ENCODE measurements at regions of chr18 and their contacts with region 1.

Region 1: GRCh38 chr18:72762515-72763122 is 105.2 kb downstream of the NETO1 start:
- DNase-seq: peak; percentile 84
- ATAC-seq: peak; percentile 61
- H3K4me3 ChIP-seq: no peak overlapping the region
- H3K27ac ChIP-seq: no peak overlapping the region
- H3K4me1 ChIP-seq: no peaks in the 10 kb centered on the region
- H3K27me3 ChIP-seq: no peaks in the 10 kb centered on the region
- CTCF ChIP-seq: peak; percentile 83

Region 2: DNA sequence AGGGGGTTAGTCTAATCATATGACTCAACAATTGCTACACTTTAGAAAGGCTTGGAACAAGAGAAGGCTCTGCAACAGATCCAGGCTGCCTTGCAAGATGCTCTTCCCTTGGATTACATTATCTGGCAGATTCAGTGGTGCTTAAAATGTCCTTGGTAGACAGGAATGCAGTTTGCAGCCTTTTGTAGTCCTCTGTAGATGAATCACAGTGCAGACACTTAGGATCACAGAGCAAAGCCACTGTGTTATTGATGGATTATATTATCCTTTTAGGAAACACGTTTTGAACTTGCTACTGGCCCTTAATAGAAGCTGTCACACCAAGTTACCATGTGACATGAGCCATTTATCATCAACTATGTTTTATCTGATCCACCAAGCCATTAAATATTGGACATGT is 370.7 kb before region 1 on chr18:
- CTCF ChIA-PET with region 1: no interaction called
- POLR2A ChIA-PET with region 1: no interaction called
- intact Hi-C with region 1: no loop called
- DNase-seq: no peak
- ATAC-seq: no peak
- H3K4me3 ChIP-seq: no peak overlapping the region
- H3K27ac ChIP-seq: no peak overlapping the region
- H3K4me1 ChIP-seq: no peaks in the 10 kb centered on the region
- H3K27me3 ChIP-seq: no peaks in the 10 kb centered on the region
- CTCF ChIP-seq: no peak

Region 3: DNA sequence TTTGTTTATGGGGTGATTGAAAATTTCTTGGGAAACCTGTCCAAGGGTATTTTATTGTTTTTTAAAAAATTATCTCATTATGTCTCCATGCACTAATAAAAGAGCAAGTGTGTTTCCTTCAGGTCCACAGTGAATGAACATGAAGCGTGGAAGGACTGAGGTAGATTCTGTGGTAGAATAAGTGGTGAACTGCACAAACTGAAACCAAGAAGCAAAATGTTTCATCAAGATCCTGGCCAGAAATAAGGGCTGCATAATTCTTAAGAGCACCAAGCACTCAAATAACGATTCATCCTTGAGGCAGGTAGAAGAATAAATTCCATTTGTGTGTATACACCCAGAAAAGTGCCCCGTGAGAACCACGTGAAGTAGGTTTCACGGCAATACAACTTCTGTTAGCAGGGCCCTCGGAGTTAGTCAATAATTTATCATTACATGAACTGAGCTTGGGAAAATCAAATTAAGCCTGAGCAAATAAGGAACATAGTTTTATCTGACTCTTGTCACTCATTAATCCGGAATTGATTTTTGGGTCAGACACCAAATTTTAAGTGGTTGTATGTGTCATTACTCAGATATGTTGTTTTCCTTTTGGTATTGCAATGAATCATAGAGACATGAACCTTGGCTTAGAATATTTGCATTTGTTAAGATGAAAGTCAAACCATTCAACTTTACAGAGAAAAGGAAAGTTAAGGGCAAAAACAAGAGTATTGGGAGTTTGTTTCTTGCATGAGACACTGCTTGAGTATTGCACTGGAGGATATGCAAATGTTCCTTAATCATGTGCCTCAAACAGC is 577.7 kb after region 1 on chr18:
- CTCF ChIA-PET with region 1: no interaction called
- POLR2A ChIA-PET with region 1: no interaction called
- intact Hi-C with region 1: loop called (anchors 5 kb)
- DNase-seq: peak; percentile 85
- ATAC-seq: peak; percentile 55
- H3K4me3 ChIP-seq: peak overlapping the region; percentile 52
- H3K27ac ChIP-seq: peak overlapping the region; percentile 92
- H3K4me1 ChIP-seq: peaks cover 36% of the 10 kb centered on the region
- H3K27me3 ChIP-seq: no peaks in the 10 kb centered on the region
- CTCF ChIP-seq: no peak

Region 4: DNA sequence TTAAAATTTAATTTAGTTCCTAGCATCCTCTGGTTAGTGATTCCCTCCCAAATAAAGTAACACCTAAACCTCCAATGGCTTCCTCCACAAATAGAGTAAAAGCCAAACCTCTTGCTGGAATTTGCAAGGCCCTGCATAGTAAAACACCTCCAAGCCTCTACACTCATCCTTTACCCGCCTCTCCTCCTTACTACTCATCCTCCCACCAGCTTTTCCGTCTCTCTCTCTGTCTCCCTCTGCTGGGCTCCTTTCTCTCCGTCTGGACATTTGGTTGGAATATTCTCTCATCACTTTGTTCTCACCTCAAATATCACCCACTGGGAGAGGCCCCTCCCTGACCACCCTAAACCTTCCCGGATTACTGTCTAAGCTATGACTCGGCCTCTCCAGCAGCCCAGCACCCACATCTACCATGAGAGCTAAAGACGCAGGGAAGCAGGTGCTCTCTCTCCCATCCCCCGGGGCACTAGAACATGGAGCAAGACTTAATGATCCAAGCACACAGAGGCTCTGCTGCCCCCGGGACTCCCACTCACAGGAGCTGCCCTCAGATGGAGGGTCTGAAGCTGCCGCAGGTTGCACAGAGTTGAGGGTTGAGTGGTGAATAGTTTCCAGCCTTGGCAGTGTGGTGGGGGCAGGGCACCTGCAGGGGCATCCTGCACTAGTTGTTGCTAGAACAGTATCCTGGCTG is 1217.8 kb after region 1 on chr18:
- CTCF ChIA-PET with region 1: no interaction called
- POLR2A ChIA-PET with region 1: no interaction called
- intact Hi-C with region 1: loop called (anchors 5 kb)
- DNase-seq: peak; percentile 75
- ATAC-seq: peak; percentile 80
- H3K4me3 ChIP-seq: no peak overlapping the region
- H3K27ac ChIP-seq: no peak overlapping the region
- H3K4me1 ChIP-seq: peaks cover 25% of the 10 kb centered on the region
- H3K27me3 ChIP-seq: no peaks in the 10 kb centered on the region
- CTCF ChIP-seq: peak; percentile 87

Measured in PC-3 (cell line).